H1 (cell line): ENCODE measurements at regions of chr15 and their contacts with region 1.

Region 1: GRCh38 chr15:26260517-26261133 is 397.5 kb upstream of the ATP10A start:
- DNase-seq: peak; percentile 47 to 72
- H3K4me3 ChIP-seq: no peak overlapping the region
- H3K27ac ChIP-seq: no peak overlapping the region
- H3K4me1 ChIP-seq: peaks cover 0 to 2% (median 0%) of the 10 kb centered on the region in 4 experiments; a peak in 4 of 7 replicates
- H3K27me3 ChIP-seq: no peaks in the 10 kb centered on the region
- CTCF ChIP-seq: peak; percentile 88 to 95 (median 94)
- EP300 ChIP-seq: no peak
- POLR2A ChIP-seq: no peak
- RAD21 ChIP-seq: peak; percentile 95 to 97

Region 2: DNA sequence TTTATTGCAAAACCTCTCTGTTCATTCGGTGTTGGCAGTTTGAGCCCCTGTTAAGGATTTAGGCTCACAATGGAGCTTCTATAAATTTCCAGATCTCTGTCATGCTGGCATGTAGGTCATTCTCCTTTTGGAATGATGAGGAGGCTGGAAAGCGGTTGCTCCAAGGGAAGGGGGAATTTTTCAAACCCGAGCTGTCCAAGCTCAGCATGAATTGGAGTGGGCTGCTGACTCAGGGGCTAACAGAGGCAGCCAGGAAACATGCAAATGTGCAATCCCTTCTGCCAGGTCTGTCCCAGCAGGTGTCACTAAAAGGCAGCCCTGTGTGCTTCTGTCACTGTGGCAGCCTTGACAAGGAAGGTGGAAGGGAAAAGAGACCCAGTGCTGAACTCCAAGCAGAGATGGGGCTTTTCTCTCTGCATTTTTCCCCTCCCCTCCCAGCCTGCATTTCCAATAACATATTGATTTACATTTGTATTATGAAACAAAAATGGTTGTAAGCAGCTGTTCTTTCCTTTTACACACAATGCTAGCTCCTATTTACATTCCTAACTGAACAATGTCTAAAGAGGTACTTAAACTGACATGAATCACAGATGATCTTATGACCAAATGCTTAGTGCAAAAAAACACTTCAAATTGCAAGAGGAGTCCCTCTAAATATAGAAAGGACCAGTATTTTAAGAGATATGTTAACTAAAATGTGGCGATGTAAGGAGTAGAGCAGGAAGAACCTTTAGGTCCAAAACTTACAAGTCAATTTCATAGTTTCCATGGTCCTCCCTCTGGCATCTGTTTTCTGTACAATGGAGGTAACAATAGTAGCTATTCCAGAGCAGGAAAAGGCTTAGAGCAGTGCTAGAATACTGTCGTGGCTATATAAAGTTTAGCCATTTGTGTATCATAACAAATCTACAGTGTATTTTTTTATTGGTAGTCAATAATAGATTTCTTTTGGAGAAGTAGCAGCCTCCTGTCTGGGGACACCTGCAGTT is 313.0 kb before region 1 on chr15:
- CTCF ChIA-PET with region 1: interaction called, 15 read pairs
- POLR2A ChIA-PET with region 1: no interaction called
- DNase-seq: peak in 1 of 2 experiments; percentile 53
- H3K4me3 ChIP-seq: no peak overlapping the region
- H3K27ac ChIP-seq: no peak overlapping the region
- H3K4me1 ChIP-seq: peaks cover 0 to 10% (median 2%) of the 10 kb centered on the region in 4 experiments; a peak in 3 of 7 replicates
- H3K27me3 ChIP-seq: no peaks in the 10 kb centered on the region
- CTCF ChIP-seq: peak; percentile 34 to 45 (median 34); a peak in 3 of 4 replicates
- EP300 ChIP-seq: no peak
- POLR2A ChIP-seq: no peak
- RAD21 ChIP-seq: peak; percentile 68 to 72

Region 3: DNA sequence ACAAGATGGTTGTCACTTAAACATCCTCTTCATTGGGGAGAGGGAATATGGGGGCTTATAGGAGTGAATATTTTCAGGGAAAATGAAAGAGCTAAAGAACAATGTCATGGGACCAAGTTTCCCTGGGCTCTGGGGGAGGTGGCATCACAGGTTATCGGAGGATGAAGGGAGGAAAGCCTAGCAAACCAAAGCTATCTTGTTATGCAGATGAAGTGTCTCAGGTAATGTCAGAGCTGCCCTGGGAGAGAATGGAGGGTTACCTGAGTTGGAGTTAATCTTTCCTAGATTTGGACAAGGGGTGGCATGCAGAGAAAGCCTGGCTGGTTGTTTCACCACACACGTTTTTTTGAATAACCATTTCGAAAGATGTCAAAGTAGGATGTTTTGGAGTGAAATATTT is 89.4 kb before region 1 on chr15:
- CTCF ChIA-PET with region 1: interaction called, 13 read pairs
- POLR2A ChIA-PET with region 1: no interaction called
- DNase-seq: no peak
- H3K4me3 ChIP-seq: no peak overlapping the region
- H3K27ac ChIP-seq: no peak overlapping the region
- H3K4me1 ChIP-seq: peaks cover 0 to 7% (median 2%) of the 10 kb centered on the region in 4 experiments; a peak in 5 of 7 replicates
- H3K27me3 ChIP-seq: no peaks in the 10 kb centered on the region
- CTCF ChIP-seq: no peak
- EP300 ChIP-seq: no peak
- POLR2A ChIP-seq: no peak
- RAD21 ChIP-seq: no peak

Region 4: GRCh38 chr15:26212109-26212508 is 48.5 kb before region 1 on chr15:
- CTCF ChIA-PET with region 1: interaction called, 10 read pairs
- POLR2A ChIA-PET with region 1: no interaction called
- DNase-seq: no peak
- H3K4me3 ChIP-seq: no peak overlapping the region
- H3K27ac ChIP-seq: no peak overlapping the region
- H3K4me1 ChIP-seq: no peaks in the 10 kb centered on the region
- H3K27me3 ChIP-seq: no peaks in the 10 kb centered on the region
- CTCF ChIP-seq: no peak
- EP300 ChIP-seq: no peak
- POLR2A ChIP-seq: no peak
- RAD21 ChIP-seq: no peak

Region 5: GRCh38 chr15:26280283-26280682 is 19.7 kb after region 1 on chr15:
- CTCF ChIA-PET with region 1: interaction called, 14 read pairs
- POLR2A ChIA-PET with region 1: no interaction called
- DNase-seq: no peak
- H3K4me3 ChIP-seq: no peak overlapping the region
- H3K27ac ChIP-seq: no peak overlapping the region
- H3K4me1 ChIP-seq: no peaks in the 10 kb centered on the region
- H3K27me3 ChIP-seq: no peaks in the 10 kb centered on the region
- CTCF ChIP-seq: no peak
- EP300 ChIP-seq: no peak
- POLR2A ChIP-seq: no peak
- RAD21 ChIP-seq: no peak